ENCODE measurements at regions of chr1 and their contacts with region 1.

Region 1: GRCh38 chr1:174159252-174160108 is at the start of gene RABGAP1L:
- DNase-seq: peak; percentile 88
- ATAC-seq: peak; percentile 84
- H3K4me3 Mint-ChIP-seq: peak within 1 kb of the TSS; percentile 96
- H3K27ac Mint-ChIP-seq: peak within 1 kb of the TSS; percentile 99
- H3K4me1 Mint-ChIP-seq: peaks cover 72% of the 10 kb centered on the region
- H3K27me3 Mint-ChIP-seq: no peaks in the 10 kb centered on the region
- CTCF ChIP-seq: no peak
- total RNA-seq, gene RABGAP1L: 103 and 126 TPM in 2 replicates

Region 2: GRCh38 chr1:173824331-173825081 is 335.0 kb before region 1 on chr1 and contains the starts of genes CENPL and DARS2:
- CTCF ChIA-PET with region 1: no interaction called
- POLR2A ChIA-PET with region 1: interaction called, 4 read pairs
- intact Hi-C with region 1: loop called (anchors 1 kb)
- DNase-seq: peak; percentile 80
- ATAC-seq: peak; percentile 89
- H3K4me3 Mint-ChIP-seq: peak within 1 kb of the TSS; percentile 95
- H3K27ac Mint-ChIP-seq: peak within 1 kb of the TSS; percentile 97
- H3K4me1 Mint-ChIP-seq: peaks cover 28% of the 10 kb centered on the region
- H3K27me3 Mint-ChIP-seq: no peaks in the 10 kb centered on the region
- CTCF ChIP-seq: no peak
- total RNA-seq, gene CENPL: 12.7 and 14.0 TPM in 2 replicates
- total RNA-seq, gene DARS2: 24.0 and 26.0 TPM in 2 replicates

Region 3: DNA sequence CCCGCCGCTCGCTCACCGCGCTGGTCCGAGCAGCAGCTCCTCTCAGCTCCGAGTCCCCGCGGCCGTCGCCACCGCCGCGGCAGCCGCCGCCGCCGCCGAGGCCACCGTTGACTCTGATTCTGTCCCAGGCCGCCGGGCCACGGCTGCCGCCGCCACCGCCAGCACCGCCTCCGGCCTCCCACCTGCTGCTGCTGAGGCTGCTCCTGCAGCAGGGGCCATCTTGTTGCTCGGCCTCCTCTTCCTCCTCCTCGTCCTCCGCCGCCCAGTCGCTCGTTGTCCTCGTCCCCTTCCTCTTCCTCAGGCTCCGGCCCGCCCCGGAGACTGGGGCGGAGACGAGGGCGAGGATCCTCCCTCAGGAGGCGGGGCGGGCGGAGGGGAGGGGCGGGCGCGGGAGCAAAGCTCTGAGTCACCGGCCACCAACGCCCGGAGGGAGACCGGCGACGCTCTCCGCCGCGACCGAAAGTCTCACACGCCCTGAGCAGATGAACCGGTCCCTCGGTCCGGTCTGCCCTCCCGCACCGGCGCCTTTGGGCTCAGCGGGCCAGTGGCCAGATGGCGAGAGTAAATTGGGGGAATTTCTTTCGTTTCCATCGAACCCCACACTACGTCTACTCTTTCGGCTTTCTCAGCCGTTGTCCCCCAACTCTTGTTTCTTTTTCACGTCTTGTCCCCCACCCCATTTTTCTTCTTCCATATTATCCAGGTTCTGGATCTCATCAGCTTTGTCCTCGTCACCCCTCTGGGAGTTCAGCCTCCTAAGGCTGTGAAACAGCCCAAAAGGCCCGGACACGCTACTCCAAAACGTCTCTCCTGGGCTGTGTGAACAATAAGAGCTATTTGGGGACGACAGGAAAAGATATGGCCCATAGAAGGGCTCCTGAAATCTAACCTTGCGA is 137.2 kb before region 1 on chr1 and contains the start of gene RC3H1:
- CTCF ChIA-PET with region 1: no interaction called
- POLR2A ChIA-PET with region 1: interaction called, 13 read pairs
- intact Hi-C with region 1: loop called (anchors 1 kb)
- DNase-seq: peak; percentile 88
- ATAC-seq: peak; percentile 93
- H3K4me3 Mint-ChIP-seq: peak within 1 kb of the TSS; percentile 97
- H3K27ac Mint-ChIP-seq: peak within 1 kb of the TSS; percentile 96
- H3K4me1 Mint-ChIP-seq: peaks cover 42% of the 10 kb centered on the region
- H3K27me3 Mint-ChIP-seq: no peaks in the 10 kb centered on the region
- CTCF ChIP-seq: no peak
- total RNA-seq, gene RC3H1: 45.6 and 55.6 TPM in 2 replicates

Region 4: DNA sequence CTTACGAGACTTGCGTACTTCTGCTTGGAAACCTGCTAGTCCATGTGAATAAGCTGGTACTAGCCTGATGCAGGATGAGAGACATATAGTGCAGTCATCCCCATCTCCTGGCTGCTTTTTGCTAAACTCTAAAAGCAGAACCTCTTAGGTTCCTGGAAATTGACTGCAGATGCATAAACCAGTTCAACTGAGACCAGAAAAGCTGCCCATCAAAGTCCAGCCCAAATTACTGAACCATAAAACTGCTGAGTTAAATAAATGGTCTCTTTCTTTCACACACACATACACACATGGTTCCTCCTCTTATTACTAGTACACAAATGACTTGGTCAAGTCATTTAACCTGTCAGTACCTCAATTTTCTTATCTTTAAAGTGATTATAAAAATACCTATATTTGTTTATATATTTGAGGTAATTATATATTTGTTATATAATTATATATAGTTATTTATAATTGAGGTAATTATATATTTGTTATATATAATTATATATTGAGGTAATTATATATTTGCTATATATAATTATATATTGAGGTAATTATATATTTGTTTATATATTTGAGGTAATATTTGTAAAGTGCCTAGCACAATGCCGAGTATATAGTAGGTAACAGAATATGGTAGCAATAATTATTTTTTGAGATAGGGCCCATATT is 25.3 kb before region 1 on chr1:
- CTCF ChIA-PET with region 1: interaction called, 3 read pairs
- POLR2A ChIA-PET with region 1: interaction called, 7 read pairs
- intact Hi-C with region 1: loop called (anchors 2 kb)
- DNase-seq: no peak
- ATAC-seq: peak; percentile 95
- H3K4me3 Mint-ChIP-seq: peak overlapping the region; percentile 49
- H3K27ac Mint-ChIP-seq: peak overlapping the region; percentile 81
- H3K4me1 Mint-ChIP-seq: peaks cover 33% of the 10 kb centered on the region
- H3K27me3 Mint-ChIP-seq: no peaks in the 10 kb centered on the region
- CTCF ChIP-seq: no peak

Region 5: DNA sequence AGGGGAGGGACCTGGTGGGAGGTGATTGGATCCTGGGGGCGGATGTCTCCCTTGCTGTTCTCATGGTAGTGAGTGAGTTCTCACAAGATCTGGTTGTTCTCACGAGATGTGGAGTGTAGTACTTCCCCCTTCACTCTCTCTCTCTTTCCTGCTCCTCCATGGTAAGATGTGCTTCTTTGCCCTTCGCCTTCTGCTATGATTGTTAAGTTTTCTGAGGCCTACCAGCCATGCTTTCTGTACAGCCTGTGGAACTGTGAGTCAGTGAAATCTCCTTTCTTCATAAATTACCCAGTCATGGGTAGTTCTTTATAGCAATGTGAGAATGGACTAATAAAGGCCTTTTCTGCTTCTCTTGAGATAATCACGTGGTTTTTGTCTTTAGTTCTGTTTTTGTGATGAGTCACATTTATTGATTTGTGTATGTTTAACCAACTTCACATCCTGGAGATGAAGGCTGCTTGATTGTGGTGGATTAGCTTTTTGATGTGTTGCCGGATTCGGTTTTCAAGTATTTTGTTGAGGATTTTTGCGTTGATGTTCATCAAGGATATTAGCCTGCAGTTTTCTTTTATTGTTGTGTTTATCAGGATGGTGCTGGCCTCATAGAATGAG is 45.3 kb after region 1 on chr1:
- CTCF ChIA-PET with region 1: no interaction called
- POLR2A ChIA-PET with region 1: interaction called, 6 read pairs
- intact Hi-C with region 1: loop called (anchors 2 kb)
- DNase-seq: no peak
- ATAC-seq: peak; percentile 60
- H3K4me3 Mint-ChIP-seq: peak overlapping the region; percentile 59
- H3K27ac Mint-ChIP-seq: peak overlapping the region; percentile 72
- H3K4me1 Mint-ChIP-seq: peaks cover 64% of the 10 kb centered on the region
- H3K27me3 Mint-ChIP-seq: no peaks in the 10 kb centered on the region
- CTCF ChIP-seq: no peak

Region 6: GRCh38 chr1:174407665-174408064 is 248.2 kb after region 1 on chr1:
- CTCF ChIA-PET with region 1: no interaction called
- POLR2A ChIA-PET with region 1: no interaction called
- intact Hi-C with region 1: no loop called
- DNase-seq: no peak
- ATAC-seq: no peak
- H3K4me3 Mint-ChIP-seq: no peak overlapping the region
- H3K27ac Mint-ChIP-seq: no peak overlapping the region
- H3K4me1 Mint-ChIP-seq: peaks cover 23% of the 10 kb centered on the region
- H3K27me3 Mint-ChIP-seq: no peaks in the 10 kb centered on the region
- CTCF ChIP-seq: no peak

Measured in activated B cell treated with CpG ODN at 0.5 μM for 24 hours (primary cell).